Activated B cell treated with CpG ODN at 0.5 μM for 24 hours (primary cell): ENCODE measurements at regions of chr11 and their contacts with region 1.

Region 1: DNA sequence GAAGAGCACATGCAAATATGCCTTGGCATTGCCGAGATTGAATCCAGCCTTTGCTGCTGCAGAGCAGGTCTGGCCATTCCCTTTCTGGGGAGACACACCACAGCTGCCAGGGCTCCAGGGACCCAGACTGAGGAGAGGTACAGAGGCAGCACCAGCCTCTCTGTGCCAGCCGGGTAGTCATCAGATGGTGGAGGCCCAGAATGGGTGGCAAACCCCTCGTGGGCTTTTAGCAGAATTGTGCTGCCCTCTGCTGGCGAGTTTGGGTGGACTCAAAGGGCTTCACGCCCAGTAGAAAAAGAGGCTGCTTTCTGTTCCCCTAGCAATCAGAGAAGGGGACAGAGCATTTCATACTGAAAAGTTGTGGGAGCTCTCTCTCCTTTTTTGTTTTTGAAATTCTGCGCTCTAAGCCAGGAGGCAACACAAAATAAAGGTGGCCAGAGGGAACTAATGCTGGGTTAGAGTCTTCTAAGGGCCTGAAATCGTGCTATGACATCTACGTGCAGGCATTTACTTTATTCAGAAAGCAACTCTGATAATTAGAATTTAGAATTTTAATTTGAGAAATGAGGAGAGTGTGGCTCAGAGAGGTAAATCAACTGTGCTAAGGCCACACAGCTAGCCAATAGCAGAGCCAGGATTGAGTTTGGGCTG is 158.8 kb upstream of the NAV2 start:
- DNase-seq: peak; percentile 53
- ATAC-seq: peak; percentile 66
- H3K4me3 Mint-ChIP-seq: no peak overlapping the region
- H3K27ac Mint-ChIP-seq: no peak overlapping the region
- H3K4me1 Mint-ChIP-seq: no peaks in the 10 kb centered on the region
- H3K27me3 Mint-ChIP-seq: peaks cover 6% of the 10 kb centered on the region
- CTCF ChIP-seq: no peak

Region 2: DNA sequence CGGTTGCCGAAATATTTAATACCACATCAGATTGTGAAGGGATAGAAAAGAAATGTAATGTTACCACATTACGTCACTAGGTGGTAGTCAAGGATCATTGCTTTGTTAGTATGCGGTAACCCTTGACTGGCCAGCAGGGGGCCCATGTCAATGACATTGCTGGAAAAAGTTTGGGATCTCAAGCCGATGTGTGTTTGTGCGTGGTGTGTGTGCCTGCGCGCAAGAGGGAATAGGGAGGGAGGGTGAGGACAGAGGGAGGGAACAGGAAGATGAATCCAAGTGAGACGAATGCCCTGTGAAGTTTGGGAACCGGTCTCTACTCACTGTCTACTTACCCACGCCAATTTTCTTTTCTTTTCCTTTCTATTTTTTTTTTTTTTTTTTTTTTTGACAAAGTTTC is 482.6 kb before region 1 on chr11:
- CTCF ChIA-PET with region 1: interaction called, 6 read pairs
- POLR2A ChIA-PET with region 1: no interaction called
- intact Hi-C with region 1: loop called (anchors 1 kb)
- DNase-seq: no peak
- ATAC-seq: peak; percentile 70
- H3K4me3 Mint-ChIP-seq: no peak overlapping the region
- H3K27ac Mint-ChIP-seq: no peak overlapping the region
- H3K4me1 Mint-ChIP-seq: peaks cover 2% of the 10 kb centered on the region
- H3K27me3 Mint-ChIP-seq: peaks cover 29% of the 10 kb centered on the region
- CTCF ChIP-seq: no peak

Region 3: DNA sequence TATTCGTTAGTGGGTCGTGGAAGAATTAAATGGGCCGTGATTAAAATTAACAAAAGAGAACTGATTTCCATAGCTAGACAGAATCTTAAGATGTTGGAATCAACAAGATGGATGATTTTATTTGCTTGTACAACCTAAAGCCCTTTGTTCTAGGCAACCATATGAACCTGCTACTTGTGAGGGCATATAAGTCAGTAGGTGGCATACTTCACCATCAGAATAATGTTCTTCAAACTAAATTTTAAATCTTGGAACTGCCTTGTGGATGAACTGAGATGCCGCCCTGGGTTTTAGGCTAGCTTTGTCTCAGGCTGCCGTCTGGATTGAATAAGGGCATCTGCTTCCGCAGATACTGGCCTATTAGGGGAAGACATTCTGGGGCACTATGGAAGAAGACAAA is 393.0 kb before region 1 on chr11:
- CTCF ChIA-PET with region 1: interaction called, 3 read pairs
- POLR2A ChIA-PET with region 1: no interaction called
- intact Hi-C with region 1: loop called (anchors 10 kb)
- DNase-seq: no peak
- ATAC-seq: no peak
- H3K4me3 Mint-ChIP-seq: no peak overlapping the region
- H3K27ac Mint-ChIP-seq: no peak overlapping the region
- H3K4me1 Mint-ChIP-seq: peaks cover 2% of the 10 kb centered on the region
- H3K27me3 Mint-ChIP-seq: no peaks in the 10 kb centered on the region
- CTCF ChIP-seq: no peak

Region 4: GRCh38 chr11:19311308-19312030 is 242.3 kb before region 1 on chr11:
- CTCF ChIA-PET with region 1: no interaction called
- POLR2A ChIA-PET with region 1: no interaction called
- intact Hi-C with region 1: loop called (anchors 1 kb)
- DNase-seq: no peak
- ATAC-seq: peak; percentile 34
- H3K4me3 Mint-ChIP-seq: no peak overlapping the region
- H3K27ac Mint-ChIP-seq: no peak overlapping the region
- H3K4me1 Mint-ChIP-seq: peaks cover 6% of the 10 kb centered on the region
- H3K27me3 Mint-ChIP-seq: no peaks in the 10 kb centered on the region
- CTCF ChIP-seq: no peak

Region 5: DNA sequence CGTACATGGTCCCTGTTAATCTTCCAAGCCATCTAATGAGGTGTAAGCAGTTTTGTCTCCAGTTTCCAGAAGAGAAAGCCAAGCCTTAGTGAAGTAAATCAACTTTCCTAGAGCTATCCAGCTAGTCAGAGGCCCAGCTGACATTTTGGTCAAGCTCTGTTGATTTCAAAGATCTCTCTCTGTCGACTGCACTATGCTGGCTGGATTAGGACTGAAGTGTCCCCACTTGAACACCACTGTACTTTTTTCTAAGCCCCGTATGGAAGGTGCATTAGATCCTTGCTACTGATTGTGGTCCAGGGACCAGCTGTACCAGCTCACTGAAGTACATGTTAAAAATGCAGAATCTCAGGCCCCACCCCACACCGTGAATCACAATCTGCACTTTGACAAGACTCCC is 17.7 kb before region 1 on chr11:
- CTCF ChIA-PET with region 1: no interaction called
- POLR2A ChIA-PET with region 1: no interaction called
- intact Hi-C with region 1: no loop called
- DNase-seq: no peak
- ATAC-seq: no peak
- H3K4me3 Mint-ChIP-seq: no peak overlapping the region
- H3K27ac Mint-ChIP-seq: no peak overlapping the region
- H3K4me1 Mint-ChIP-seq: no peaks in the 10 kb centered on the region
- H3K27me3 Mint-ChIP-seq: no peaks in the 10 kb centered on the region
- CTCF ChIP-seq: no peak

Region 6: DNA sequence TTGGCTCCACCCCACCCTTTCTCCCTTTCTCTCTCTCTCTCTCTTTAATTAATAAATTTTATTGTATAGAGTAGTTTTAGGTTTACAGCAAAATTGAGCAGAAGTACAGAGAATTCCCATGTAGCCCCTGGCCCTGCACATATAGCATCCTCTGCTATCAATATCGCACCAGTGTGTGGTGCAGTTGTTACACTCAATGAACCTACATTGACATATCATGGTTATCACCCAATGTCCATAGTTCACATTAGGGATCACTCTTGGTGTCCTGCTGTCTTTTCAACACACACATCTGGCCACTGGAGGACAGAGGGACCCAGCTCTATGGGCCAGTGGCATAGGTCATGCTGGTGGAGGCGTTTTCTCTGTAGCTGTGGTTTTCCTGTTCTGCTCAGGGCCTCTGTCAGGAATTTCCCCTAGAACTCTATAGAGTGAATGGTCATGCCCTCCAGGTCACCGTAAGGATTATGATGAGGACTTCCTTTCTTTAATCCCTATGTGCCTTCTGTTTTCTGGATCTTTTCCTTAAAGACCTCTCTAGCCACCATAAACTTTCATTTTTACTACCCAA is 60.6 kb after region 1 on chr11:
- CTCF ChIA-PET with region 1: no interaction called
- POLR2A ChIA-PET with region 1: no interaction called
- intact Hi-C with region 1: no loop called
- DNase-seq: no peak
- ATAC-seq: no peak
- H3K4me3 Mint-ChIP-seq: no peak overlapping the region
- H3K27ac Mint-ChIP-seq: no peak overlapping the region
- H3K4me1 Mint-ChIP-seq: no peaks in the 10 kb centered on the region
- H3K27me3 Mint-ChIP-seq: no peaks in the 10 kb centered on the region
- CTCF ChIP-seq: no peak

Region 7: DNA sequence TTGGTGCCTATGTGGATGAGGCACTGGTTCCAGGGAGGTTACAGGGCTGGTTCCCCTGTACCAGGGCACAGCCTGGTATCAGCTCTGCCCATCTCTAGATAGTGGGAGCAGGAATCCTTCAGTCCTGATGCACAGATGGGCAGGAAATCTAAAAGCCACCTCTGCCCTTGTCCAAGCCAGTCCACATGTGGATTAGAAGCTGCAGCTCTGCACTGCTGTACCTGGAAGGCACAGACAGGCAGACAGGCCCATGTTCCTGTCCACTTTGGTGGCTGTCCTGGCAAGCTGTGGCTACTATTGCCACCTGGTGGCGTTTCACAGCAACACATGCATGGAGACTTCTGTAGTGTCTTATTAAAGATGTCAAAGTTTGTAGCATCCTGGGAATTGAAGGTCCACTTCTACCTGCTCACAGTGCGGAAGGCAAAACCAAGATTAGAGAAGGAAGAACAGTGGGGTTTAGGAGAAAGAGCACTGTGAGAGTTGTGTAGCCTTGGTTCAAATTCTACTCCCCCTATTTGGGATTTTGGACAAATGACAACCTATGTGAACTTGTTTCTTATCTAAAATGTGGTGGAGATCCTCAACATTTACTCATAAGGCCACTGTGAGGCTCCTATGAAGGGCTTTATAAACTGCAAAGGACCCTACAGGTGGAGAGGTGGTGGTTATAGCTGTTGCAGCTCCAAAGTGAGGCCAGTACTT is 188.9 kb after region 1 on chr11:
- CTCF ChIA-PET with region 1: interaction called, 4 read pairs
- POLR2A ChIA-PET with region 1: no interaction called
- intact Hi-C with region 1: loop called (anchors 2 kb)
- DNase-seq: peak; percentile 22
- ATAC-seq: peak; percentile 58
- H3K4me3 Mint-ChIP-seq: no peak overlapping the region
- H3K27ac Mint-ChIP-seq: no peak overlapping the region
- H3K4me1 Mint-ChIP-seq: no peaks in the 10 kb centered on the region
- H3K27me3 Mint-ChIP-seq: peaks cover 2% of the 10 kb centered on the region
- CTCF ChIP-seq: no peak